Lower lobe of right lung (tissue), 2 donors: ENCODE measurements at regions of chr5 and their contacts with region 1.

Region 1: GRCh38 chr5:154467655-154468354 is 10.2 kb downstream of the HAND1 start:
- DNase-seq: peak; percentile 84
- ATAC-seq: peak; percentile 91 to 95
- H3K4me3 ChIP-seq: no peak overlapping the region
- H3K27ac ChIP-seq: no peak overlapping the region
- H3K4me1 ChIP-seq: peaks cover 2% of the 10 kb centered on the region
- H3K27me3 ChIP-seq: peaks cover 44% of the 10 kb centered on the region
- CTCF ChIP-seq: peak; percentile 94

Region 2: GRCh38 chr5:154603978-154604679 is 136.3 kb after region 1 on chr5:
- intact Hi-C with region 1: loop called (anchors 10 kb)
- DNase-seq: peak; percentile 70
- ATAC-seq: peak; percentile 74 to 86
- H3K4me3 ChIP-seq: no peak overlapping the region
- H3K27ac ChIP-seq: no peak overlapping the region
- H3K4me1 ChIP-seq: peaks cover 7% of the 10 kb centered on the region
- H3K27me3 ChIP-seq: peaks cover 20% of the 10 kb centered on the region
- CTCF ChIP-seq: no peak

Region 3: GRCh38 chr5:155430192-155430591 is 962.4 kb after region 1 on chr5:
- intact Hi-C with region 1: no loop called
- DNase-seq: no peak
- ATAC-seq: no peak
- H3K4me3 ChIP-seq: no peak overlapping the region
- H3K27ac ChIP-seq: no peak overlapping the region
- H3K4me1 ChIP-seq: no peaks in the 10 kb centered on the region
- H3K27me3 ChIP-seq: no peaks in the 10 kb centered on the region
- CTCF ChIP-seq: no peak